ENCODE measurements at regions of chr3 and their contacts with region 1.

Region 1: GRCh38 chr3:97764407-97765238 is at the start of gene ARL6:
- DNase-seq: peak; percentile 53 to 78 (median 73)
- ATAC-seq: peak; percentile 95
- H3K4me3 ChIP-seq: peak within 1 kb of the TSS; percentile 98
- H3K4me3 Mint-ChIP-seq: peak within 1 kb of the TSS; percentile 91 to 99 (median 98)
- H3K27ac ChIP-seq: peak within 1 kb of the TSS; percentile 78
- H3K27ac Mint-ChIP-seq: peak within 1 kb of the TSS; percentile 90 to 97 (median 93)
- H3K4me1 ChIP-seq: peaks cover 5 to 15% of the 10 kb centered on the region in 2 donors
- H3K4me1 Mint-ChIP-seq: peaks cover 9 to 36% (median 27%) of the 10 kb centered on the region in 7 donors
- H3K27me3 ChIP-seq: no peaks in the 10 kb centered on the region
- H3K27me3 Mint-ChIP-seq: peaks cover 0 to 4% (median 0%) of the 10 kb centered on the region in 5 donors
- total RNA-seq, gene ARL6: 3.0 to 7.5 (median 5.8) TPM

Region 2: GRCh38 chr3:98022978-98023820 is 258.6 kb after region 1 on chr3:
- CTCF ChIA-PET with region 1: interaction called, 3 read pairs
- POLR2A ChIA-PET with region 1: no interaction called
- intact Hi-C with region 1: loop called in 1 of 2 experiments (anchors 1 kb)
- DNase-seq: peak; percentile 72 to 96 (median 85)
- ATAC-seq: peak; percentile 85
- H3K4me3 ChIP-seq: no peak overlapping the region
- H3K4me3 Mint-ChIP-seq: peak overlapping the region in 3 of 10 donors; percentile 0 to 58 (median 8)
- H3K27ac ChIP-seq: no peak overlapping the region
- H3K27ac Mint-ChIP-seq: peak overlapping the region in 7 of 9 donors; percentile 2 to 66 (median 20)
- H3K4me1 ChIP-seq: peaks cover 0 to under 1% of the 10 kb centered on the region in 2 donors
- H3K4me1 Mint-ChIP-seq: peaks cover 2 to 27% (median 10%) of the 10 kb centered on the region in 7 donors
- H3K27me3 ChIP-seq: no peaks in the 10 kb centered on the region
- H3K27me3 Mint-ChIP-seq: peaks cover 0 to 5% (median 0%) of the 10 kb centered on the region in 5 donors

Region 3: DNA sequence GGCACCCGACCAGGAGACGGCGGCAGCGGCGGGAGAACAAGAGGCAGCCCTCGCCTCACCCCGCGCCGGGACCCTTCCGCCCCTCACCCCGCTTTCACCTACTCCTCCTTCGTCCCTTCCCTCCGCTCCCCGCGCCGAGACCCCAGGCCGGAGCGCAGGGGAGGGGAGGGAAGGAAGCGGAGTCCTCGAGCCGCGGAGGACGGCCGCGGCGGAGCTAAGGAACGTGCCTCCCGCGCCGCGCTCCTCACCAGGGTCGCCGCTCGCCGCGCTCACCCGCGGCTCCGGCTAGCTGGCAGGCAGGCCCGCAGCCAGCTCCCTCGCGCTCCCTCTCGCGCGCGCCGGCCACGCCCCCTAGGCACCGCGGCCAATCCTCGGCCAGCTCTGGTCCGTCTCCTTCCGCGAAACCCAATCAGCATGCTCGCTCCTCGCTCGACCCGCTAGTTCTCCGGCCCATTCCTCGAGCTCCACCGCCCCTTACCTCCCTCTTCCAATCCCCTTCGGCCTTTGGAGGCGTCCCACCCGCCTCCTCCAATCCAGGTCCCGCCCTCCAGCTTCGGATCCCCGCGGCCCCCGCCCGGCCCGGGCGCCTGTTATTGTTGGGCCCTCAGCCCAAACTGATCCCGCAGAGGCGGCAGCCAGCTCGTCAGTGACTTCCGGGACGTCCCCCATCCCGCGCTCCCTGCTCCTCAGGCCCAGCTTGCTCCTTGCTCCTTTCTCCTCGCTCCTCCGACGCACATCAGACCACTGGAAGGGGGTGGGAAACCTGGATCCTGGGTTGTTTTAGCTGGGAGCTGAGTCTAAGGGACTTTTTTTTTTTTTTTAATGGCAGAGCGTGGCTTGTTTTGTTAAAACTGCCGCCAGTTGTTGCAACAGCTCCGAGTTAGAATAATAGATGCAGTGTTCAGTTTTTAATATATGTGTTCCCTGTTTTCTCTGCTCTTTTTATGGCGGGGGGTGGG is 1137.0 kb after region 1 on chr3 and contains the start of gene DCBLD2:
- CTCF ChIA-PET with region 1: no interaction called
- POLR2A ChIA-PET with region 1: interaction called, 4 read pairs
- intact Hi-C with region 1: loop called (anchors 2 kb)
- DNase-seq: peak; percentile 90 to 96 (median 94)
- ATAC-seq: peak; percentile 99
- H3K4me3 ChIP-seq: peak within 1 kb of the TSS; percentile 86
- H3K4me3 Mint-ChIP-seq: peak within 1 kb of the TSS; percentile 89 to 97 (median 94)
- H3K27ac ChIP-seq: peak within 1 kb of the TSS; percentile 78
- H3K27ac Mint-ChIP-seq: peak within 1 kb of the TSS; percentile 44 to 96 (median 86)
- H3K4me1 ChIP-seq: peaks cover 5% of the 10 kb centered on the region in 2 donors
- H3K4me1 Mint-ChIP-seq: peaks cover 14 to 27% (median 22%) of the 10 kb centered on the region in 7 donors
- H3K27me3 ChIP-seq: no peaks in the 10 kb centered on the region
- H3K27me3 Mint-ChIP-seq: peaks cover 0 to 30% (median 8%) of the 10 kb centered on the region in 5 donors
- total RNA-seq, gene DCBLD2: 1.9 to 4.7 (median 2.9) TPM

Measured in naive thymus-derived CD4-positive, alpha-beta T cell (primary cell).